ENCODE measurements at regions of chr1 and their contacts with region 1.

Region 1: GRCh38 chr1:115138968-115139367 is 49.7 kb upstream of the TSPAN2 start:
- DNase-seq: peak; percentile 83
- H3K4me3 ChIP-seq: no peak overlapping the region
- H3K27ac ChIP-seq: no peak overlapping the region
- H3K4me1 ChIP-seq: peaks cover 28% of the 10 kb centered on the region
- H3K27me3 ChIP-seq: no peaks in the 10 kb centered on the region
- CTCF ChIP-seq: peak; percentile 93 to 96

Region 2: DNA sequence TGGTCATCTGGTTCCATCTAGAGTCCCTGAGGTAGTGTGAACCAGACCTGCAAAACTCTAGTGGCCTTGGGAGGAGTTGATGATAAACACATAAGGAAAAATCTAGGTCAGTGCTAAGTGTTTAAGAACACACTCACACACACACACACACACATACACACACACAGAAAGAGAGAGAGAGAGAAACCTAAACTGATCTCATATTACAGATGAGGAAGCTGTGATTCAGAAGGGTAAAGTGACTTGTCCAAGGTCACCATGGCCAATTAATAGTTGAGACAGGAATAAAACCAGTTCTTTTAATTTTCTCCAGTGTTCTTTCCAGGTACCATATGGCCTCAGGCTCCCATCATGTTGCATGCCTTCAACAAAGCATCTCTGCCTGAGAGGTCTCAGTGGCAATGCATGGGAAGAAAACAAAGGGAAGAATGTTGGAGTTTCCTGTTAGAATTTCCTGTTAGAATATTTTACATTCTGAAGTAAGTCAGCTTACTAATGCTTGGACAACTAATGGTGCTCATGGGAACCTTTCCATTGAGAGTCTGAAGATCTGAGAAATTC is 27.6 kb after region 1 on chr1:
- CTCF ChIA-PET with region 1: no interaction called
- dilution Hi-C with region 1: no loop called
- in situ Hi-C with region 1: no loop called
- intact Hi-C with region 1: loop called (anchors 1 kb)
- DNase-seq: peak; percentile 59
- H3K4me3 ChIP-seq: no peak overlapping the region
- H3K27ac ChIP-seq: no peak overlapping the region
- H3K4me1 ChIP-seq: peaks cover 29% of the 10 kb centered on the region
- H3K27me3 ChIP-seq: no peaks in the 10 kb centered on the region
- CTCF ChIP-seq: no peak

Region 3: DNA sequence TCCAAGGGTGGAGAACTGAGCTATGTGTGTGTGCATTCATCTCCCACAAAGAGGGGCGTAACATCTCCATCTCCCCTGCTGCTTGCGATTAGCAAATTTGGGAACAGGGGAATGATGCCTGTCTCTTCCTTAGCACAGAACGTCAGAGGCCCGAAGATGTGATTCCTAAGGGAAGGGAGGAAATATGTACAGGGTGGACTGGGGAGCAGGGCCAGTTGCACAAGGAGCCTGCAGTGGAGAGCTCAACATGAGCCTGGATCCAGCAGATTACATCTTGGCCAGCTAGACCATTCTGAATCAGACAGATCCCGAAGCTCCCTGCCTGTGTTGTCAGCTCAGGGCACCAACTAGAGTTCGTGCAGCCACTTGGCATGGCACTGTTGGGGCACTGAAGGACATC is 81.0 kb after region 1 on chr1:
- CTCF ChIA-PET with region 1: no interaction called
- dilution Hi-C with region 1: no loop called
- in situ Hi-C with region 1: no loop called
- intact Hi-C with region 1: loop called (anchors 1 kb)
- DNase-seq: no peak
- H3K4me3 ChIP-seq: no peak overlapping the region
- H3K27ac ChIP-seq: no peak overlapping the region
- H3K4me1 ChIP-seq: peaks cover 28% of the 10 kb centered on the region
- H3K27me3 ChIP-seq: no peaks in the 10 kb centered on the region
- CTCF ChIP-seq: no peak

Region 4: GRCh38 chr1:115275212-115275611 is 136.2 kb after region 1 on chr1:
- CTCF ChIA-PET with region 1: no interaction called
- dilution Hi-C with region 1: no loop called
- in situ Hi-C with region 1: no loop called
- intact Hi-C with region 1: loop called (anchors 2 kb)
- DNase-seq: no peak
- H3K4me3 ChIP-seq: no peak overlapping the region
- H3K27ac ChIP-seq: no peak overlapping the region
- H3K4me1 ChIP-seq: no peaks in the 10 kb centered on the region
- H3K27me3 ChIP-seq: no peaks in the 10 kb centered on the region
- CTCF ChIP-seq: peak; percentile 45 to 72

Region 5: GRCh38 chr1:115463363-115463746 is 324.4 kb after region 1 on chr1:
- CTCF ChIA-PET with region 1: interaction called, 7 read pairs
- dilution Hi-C with region 1: loop called (anchors 25 kb)
- in situ Hi-C with region 1: loop called (anchors 5 kb)
- intact Hi-C with region 1: loop called (anchors 1 kb)
- DNase-seq: peak; percentile 25
- H3K4me3 ChIP-seq: no peak overlapping the region
- H3K27ac ChIP-seq: no peak overlapping the region
- H3K4me1 ChIP-seq: no peaks in the 10 kb centered on the region
- H3K27me3 ChIP-seq: no peaks in the 10 kb centered on the region
- CTCF ChIP-seq: peak in 1 of 2 donors; percentile 70

Region 6: DNA sequence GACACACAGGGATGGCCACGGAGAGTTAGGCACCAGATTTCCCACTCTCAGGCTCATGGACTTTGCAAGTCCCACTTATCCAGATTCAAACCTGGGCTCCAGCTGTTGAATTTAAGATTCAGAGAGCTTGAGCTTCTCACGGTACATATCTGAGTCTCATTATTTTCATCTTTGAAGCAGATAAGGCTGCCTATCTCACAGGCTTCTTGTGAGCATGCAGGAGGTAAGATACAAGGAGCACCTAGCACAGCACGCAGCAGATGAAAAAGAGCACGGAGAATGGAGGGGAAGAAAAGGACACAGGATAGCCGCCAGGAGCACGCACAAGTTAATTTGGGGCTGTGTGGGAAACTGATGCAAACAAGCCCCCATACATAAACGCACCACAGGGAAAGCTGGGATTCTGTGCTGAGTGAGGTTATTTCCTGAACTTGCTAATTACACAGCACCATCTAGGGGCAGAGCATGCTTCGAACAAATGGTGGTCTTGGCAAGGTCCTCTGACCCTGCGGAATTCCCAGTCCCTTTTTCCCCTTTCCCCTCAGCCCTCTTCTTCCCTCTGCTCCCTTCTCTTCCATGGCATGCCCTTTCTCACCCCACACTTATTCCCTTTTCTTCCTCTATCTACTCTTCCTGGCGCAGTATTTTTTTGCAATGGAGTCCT is 368.1 kb after region 1 on chr1:
- CTCF ChIA-PET with region 1: no interaction called
- dilution Hi-C with region 1: no loop called
- in situ Hi-C with region 1: no loop called
- intact Hi-C with region 1: loop called (anchors 1 kb)
- DNase-seq: no peak
- H3K4me3 ChIP-seq: no peak overlapping the region
- H3K27ac ChIP-seq: no peak overlapping the region
- H3K4me1 ChIP-seq: peaks cover 8% of the 10 kb centered on the region
- H3K27me3 ChIP-seq: no peaks in the 10 kb centered on the region
- CTCF ChIP-seq: peak; percentile 25 to 47

Region 7: GRCh38 chr1:115595279-115596079 is 456.5 kb after region 1 on chr1:
- CTCF ChIA-PET with region 1: interaction called, 4 read pairs
- dilution Hi-C with region 1: no loop called
- in situ Hi-C with region 1: loop called (anchors 5 kb)
- intact Hi-C with region 1: loop called (anchors 1 kb)
- DNase-seq: peak; percentile 84
- H3K4me3 ChIP-seq: no peak overlapping the region
- H3K27ac ChIP-seq: no peak overlapping the region
- H3K4me1 ChIP-seq: peaks cover 3% of the 10 kb centered on the region
- H3K27me3 ChIP-seq: no peaks in the 10 kb centered on the region
- CTCF ChIP-seq: peak; percentile 98 to 99